Sigmoid colon (tissue), 7 donors: ENCODE measurements at regions of chr5 and their contacts with region 1.

Region 1: DNA sequence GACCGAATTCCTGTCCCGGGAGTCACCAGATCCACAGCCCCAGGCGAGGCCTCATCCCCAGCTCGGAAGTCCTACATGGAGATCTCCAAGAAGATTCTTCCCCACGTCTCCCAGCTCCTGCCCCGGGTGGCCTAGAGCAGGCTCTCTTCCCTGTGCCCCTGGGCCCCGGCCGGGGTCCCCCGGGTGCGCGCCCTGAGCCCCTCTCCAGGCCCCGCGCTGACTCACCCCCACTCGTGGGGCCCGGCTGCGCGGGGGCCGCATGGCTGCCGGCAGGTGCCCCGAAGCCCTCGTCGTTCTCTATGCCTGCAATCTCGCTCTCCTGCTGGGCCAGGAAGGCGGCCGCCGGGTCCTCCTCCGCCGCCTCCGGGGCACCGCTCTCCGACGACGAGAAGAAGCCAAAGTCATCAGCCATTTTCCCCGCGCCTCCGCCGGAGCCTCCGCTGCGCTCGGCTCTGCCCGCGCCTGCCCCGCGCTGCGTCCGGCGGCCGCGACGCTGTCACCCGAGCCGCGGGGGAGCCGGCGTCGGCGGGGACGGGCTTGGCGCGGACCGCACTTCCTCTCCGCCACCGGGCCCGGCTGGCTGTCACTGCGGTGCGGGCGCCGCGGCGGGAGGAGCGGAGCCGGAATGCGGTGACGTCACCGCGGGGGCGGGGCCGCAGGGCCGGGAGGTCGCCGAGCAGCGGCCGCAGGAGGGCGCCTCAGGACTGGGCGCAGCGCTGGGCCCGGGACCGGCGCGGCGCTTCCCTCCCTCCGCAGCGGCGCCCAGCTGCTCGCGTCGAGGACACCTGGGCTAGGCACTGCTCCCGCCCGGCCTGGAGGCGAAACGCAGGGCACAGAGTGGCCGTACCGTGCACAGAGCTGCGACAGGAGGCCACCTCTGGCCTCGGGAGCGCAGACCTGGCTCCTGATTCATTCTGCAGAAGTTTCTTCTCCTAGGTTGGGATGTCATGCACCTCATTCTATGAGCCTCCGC is at the start of gene CLTB:
- DNase-seq: peak; percentile 95
- H3K4me3 ChIP-seq: peak within 1 kb of the TSS; percentile 85 to 100 (median 90)
- H3K27ac ChIP-seq: peak within 1 kb of the TSS; percentile 92 to 95 (median 94)
- H3K4me1 ChIP-seq: peaks cover 0 to 48% (median 38%) of the 10 kb centered on the region in 4 donors
- H3K27me3 ChIP-seq: no peaks in the 10 kb centered on the region
- CTCF ChIP-seq: peak in 1 of 4 experiments; percentile 69
- EP300 ChIP-seq: no peak
- POLR2A ChIP-seq: no peak
- total RNA-seq, gene CLTB: 129 to 163 (median 156) TPM

Region 2: GRCh38 chr5:176361437-176362232 is 54.6 kb before region 1 on chr5 and contains the start of gene KIAA1191:
- intact Hi-C with region 1: loop called (anchors 2 kb)
- DNase-seq: peak; percentile 96
- H3K4me3 ChIP-seq: peak within 1 kb of the TSS; percentile 72 to 99 (median 80)
- H3K27ac ChIP-seq: peak within 1 kb of the TSS; percentile 72 to 87 (median 84)
- H3K4me1 ChIP-seq: peaks cover 0 to 36% (median 29%) of the 10 kb centered on the region in 4 donors
- H3K27me3 ChIP-seq: no peaks in the 10 kb centered on the region
- CTCF ChIP-seq: peak in 2 of 4 experiments; percentile 3 to 9
- EP300 ChIP-seq: no peak
- POLR2A ChIP-seq: peak; percentile 55 to 85
- total RNA-seq, gene KIAA1191: 88.8 to 117 (median 108) TPM

Region 3: DNA sequence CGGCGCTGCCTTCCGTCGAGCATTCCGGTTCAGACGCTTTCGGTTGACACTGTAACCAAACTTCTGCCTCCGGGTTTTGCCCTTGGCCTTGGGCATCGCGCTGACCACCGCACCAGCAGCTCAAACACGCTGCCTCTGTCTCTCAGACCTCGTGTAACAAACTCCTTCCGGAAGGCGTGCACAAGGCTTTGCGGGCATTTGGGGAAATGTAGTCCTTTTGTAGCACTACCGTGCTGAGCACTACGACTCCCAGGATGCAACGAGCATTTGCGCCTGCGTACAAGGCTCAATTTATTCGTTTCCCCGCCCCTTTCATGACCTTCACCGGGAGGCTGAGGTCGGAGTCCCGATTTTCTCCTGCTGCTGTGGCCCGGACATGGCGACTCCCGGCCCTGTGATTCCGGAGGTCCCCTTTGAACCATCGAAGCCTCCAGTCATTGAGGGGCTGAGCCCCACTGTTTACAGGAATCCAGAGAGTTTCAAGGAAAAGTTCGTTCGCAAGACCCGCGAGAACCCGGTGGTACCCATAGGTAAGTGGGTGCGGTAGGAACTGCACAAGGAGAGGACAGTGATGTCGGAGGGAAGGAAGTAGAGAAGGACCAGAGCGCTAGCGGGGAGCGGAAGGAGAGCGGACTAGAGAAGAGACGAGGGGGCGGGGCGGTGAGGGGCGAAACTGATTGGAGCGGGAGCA is 27.6 kb before region 1 on chr5 and contains the starts of genes HIGD2A and NOP16:
- intact Hi-C with region 1: loop called (anchors 2 kb)
- DNase-seq: peak; percentile 100
- H3K4me3 ChIP-seq: peak within 1 kb of the TSS; percentile 57 to 65 (median 61)
- H3K27ac ChIP-seq: peak within 1 kb of the TSS; percentile 88 to 94 (median 93)
- H3K4me1 ChIP-seq: peaks cover 0 to 30% (median 25%) of the 10 kb centered on the region in 4 donors
- H3K27me3 ChIP-seq: no peaks in the 10 kb centered on the region
- CTCF ChIP-seq: peak in 1 of 4 experiments; percentile 36
- EP300 ChIP-seq: no peak
- POLR2A ChIP-seq: no peak
- total RNA-seq, gene HIGD2A: 201 to 249 (median 235) TPM
- total RNA-seq, gene NOP16: 4.4 to 17.8 (median 9.6) TPM

Region 4: DNA sequence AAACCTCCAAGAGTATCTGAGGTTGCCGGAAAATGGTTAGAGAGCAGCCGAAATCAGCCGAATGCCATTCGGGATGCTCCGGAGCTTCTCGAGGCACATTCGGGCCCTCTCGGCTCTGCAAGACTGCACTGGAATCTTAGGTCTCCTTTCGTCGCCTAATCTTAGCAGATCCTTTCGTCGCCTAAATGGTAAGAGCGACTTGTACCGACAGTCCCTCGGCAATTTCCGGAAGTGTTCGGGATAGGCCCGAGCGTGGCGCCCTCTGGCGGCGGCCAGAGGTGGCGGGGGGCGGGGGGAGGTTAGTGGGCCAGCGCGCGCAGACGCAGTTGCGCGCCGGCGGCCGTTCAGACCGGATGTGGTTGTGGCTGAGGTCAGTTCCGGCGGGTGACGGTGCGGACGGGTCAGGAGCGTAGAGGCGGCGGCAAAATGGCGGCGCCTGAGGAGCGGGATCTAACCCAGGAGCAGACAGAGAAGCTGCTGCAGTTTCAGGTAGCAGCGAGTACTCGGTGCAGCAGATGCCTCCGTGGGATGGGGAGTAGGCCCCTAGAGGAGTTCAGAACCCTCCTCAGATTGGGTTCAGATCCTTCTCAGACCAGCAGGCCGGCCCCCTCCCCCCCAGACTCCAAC is 31.9 kb after region 1 on chr5 and contains the start of gene FAF2:
- intact Hi-C with region 1: loop called (anchors 1 kb)
- DNase-seq: peak; percentile 98
- H3K4me3 ChIP-seq: peak within 1 kb of the TSS; percentile 65 to 99 (median 94)
- H3K27ac ChIP-seq: peak within 1 kb of the TSS; percentile 94 to 98 (median 96)
- H3K4me1 ChIP-seq: peaks cover 0 to 27% (median 25%) of the 10 kb centered on the region in 4 donors
- H3K27me3 ChIP-seq: no peaks in the 10 kb centered on the region
- CTCF ChIP-seq: peak; percentile 88 to 98 (median 96)
- EP300 ChIP-seq: peak in 1 of 4 donors; percentile 16
- POLR2A ChIP-seq: peak; percentile 67 to 85
- total RNA-seq, gene FAF2: 18.5 to 24.6 (median 19.1) TPM

Region 5: DNA sequence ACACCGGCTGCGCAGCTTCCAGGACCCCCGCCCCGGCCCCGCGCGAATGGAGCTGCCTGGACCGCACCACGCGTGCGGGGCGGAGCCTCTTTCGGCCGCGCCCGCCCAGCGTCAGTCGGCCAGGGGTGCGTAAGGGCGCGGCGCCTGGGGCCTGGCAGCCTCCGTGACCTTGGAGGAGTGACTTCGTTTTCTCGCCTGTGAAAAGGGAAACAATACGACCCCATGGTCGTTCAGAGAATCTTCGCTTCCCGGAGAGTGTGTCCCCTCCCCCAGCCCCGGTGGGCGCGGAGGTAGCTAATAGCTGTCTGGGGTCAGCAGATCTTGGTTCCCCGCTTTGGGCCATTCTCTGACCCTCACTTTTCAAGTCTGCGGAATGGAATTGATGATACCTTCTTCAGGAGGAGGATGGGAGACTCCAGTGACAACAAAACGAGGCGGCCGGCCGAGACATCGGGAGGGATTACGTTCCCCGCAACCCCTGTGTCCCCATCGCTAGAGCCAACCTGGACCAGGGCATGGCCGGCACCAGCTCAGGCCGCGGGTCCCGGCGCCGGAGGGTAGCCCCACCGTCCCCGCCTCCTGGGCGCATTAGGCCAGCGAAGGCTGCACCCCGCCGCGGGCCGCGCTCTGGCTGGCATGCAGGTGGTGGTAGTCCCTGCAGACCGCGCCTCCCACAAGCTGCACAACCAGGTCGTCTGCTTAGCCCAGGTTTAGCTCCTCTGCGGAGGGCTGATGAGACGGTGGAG is 127.4 kb after region 1 on chr5:
- intact Hi-C with region 1: loop called (anchors 2 kb)
- DNase-seq: peak; percentile 84
- H3K4me3 ChIP-seq: peak overlapping the region; percentile 47 to 82 (median 68)
- H3K27ac ChIP-seq: peak overlapping the region; percentile 81 to 91 (median 87)
- H3K4me1 ChIP-seq: peaks cover 0 to 40% (median 21%) of the 10 kb centered on the region in 4 donors
- H3K27me3 ChIP-seq: no peaks in the 10 kb centered on the region
- CTCF ChIP-seq: no peak
- EP300 ChIP-seq: no peak
- POLR2A ChIP-seq: peak in 1 of 2 donors; percentile 84

Region 6: DNA sequence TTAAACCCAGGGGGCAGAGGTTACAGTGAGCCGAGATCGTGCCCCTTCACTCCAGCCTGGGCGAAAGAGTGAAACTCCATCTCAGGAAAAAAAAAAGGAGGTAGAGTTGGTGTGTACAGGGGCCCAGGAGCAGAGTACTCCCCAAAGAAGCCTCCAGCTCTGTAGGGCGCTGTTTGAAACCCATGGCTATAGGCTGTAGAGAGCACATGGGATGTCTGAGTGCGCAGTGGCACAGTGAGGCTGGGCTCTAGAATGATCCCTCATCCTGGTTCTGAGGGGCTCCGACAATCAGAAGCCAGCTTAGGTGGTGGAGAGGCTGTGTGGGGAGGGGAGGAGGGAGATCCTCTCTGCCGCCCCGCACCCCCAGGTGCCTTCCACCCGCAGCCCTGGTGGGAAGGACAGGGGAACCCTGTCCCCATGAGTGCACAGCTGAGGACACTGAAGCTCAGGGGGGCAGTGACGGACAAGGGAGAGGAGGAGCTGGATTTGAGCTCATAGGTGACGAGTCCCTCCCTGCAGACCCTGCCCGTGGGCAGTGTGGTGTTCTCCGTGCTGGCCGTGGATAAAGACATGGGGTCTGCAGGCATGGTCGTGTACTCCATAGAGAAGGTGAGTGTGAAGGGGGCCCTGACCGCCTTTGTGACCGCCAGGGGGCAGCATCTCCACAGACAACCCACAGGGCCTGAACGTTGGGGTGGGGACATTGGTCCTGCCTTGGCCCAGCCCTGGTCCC is 157.5 kb after region 1 on chr5:
- intact Hi-C with region 1: loop called (anchors 10 kb)
- DNase-seq: peak; percentile 73
- H3K4me3 ChIP-seq: no peak overlapping the region
- H3K27ac ChIP-seq: no peak overlapping the region
- H3K4me1 ChIP-seq: no peaks in the 10 kb centered on the region
- H3K27me3 ChIP-seq: peaks cover 0 to 17% (median 0%) of the 10 kb centered on the region in 3 donors
- CTCF ChIP-seq: peak; percentile 24 to 76 (median 60)
- EP300 ChIP-seq: no peak
- POLR2A ChIP-seq: no peak

Region 7: GRCh38 chr5:176647030-176647866 is 231.0 kb after region 1 on chr5 and contains the start of gene TSPAN17:
- intact Hi-C with region 1: loop called (anchors 5 kb)
- DNase-seq: peak; percentile 100
- H3K4me3 ChIP-seq: peak within 1 kb of the TSS; percentile 61 to 85 (median 70)
- H3K27ac ChIP-seq: peak within 1 kb of the TSS; percentile 79 to 82 (median 82)
- H3K4me1 ChIP-seq: peaks cover 0 to 22% (median 20%) of the 10 kb centered on the region in 4 donors
- H3K27me3 ChIP-seq: no peaks in the 10 kb centered on the region
- CTCF ChIP-seq: peak in 1 of 4 experiments; percentile 11
- EP300 ChIP-seq: peak in 1 of 4 donors; percentile 9
- POLR2A ChIP-seq: peak; percentile 11 to 25
- total RNA-seq, gene TSPAN17: 7.4 to 22.4 (median 9.7) TPM